ENCODE measurements at regions of chr18 and their contacts with region 1.

Region 1: GRCh38 chr18:3454365-3455089 is 4.6 kb downstream of the TGIF1 start:
- DNase-seq: no peak
- ATAC-seq: no peak
- H3K4me3 ChIP-seq: peak overlapping the region; percentile 97
- H3K27ac ChIP-seq: peak overlapping the region; percentile 100
- H3K4me1 ChIP-seq: peaks cover 32% of the 10 kb centered on the region
- H3K27me3 ChIP-seq: no peaks in the 10 kb centered on the region
- CTCF ChIP-seq: peak; percentile 68

Region 2: GRCh38 chr18:3525870-3526420 is 71.4 kb after region 1 on chr18:
- intact Hi-C with region 1: loop called in 1 of 2 experiments (anchors 5 kb)
- DNase-seq: no peak
- ATAC-seq: peak; percentile 62 to 78 (median 75)
- H3K4me3 ChIP-seq: peak overlapping the region; percentile 17
- H3K27ac ChIP-seq: peak overlapping the region; percentile 74
- H3K4me1 ChIP-seq: peaks cover 11% of the 10 kb centered on the region
- H3K27me3 ChIP-seq: peaks cover 0 to 2% (median 0%) of the 10 kb centered on the region in 3 donors
- CTCF ChIP-seq: no peak

Region 3: GRCh38 chr18:3566851-3567250 is 112.3 kb after region 1 on chr18:
- intact Hi-C with region 1: no loop called
- DNase-seq: no peak
- ATAC-seq: no peak
- H3K4me3 ChIP-seq: no peak overlapping the region
- H3K27ac ChIP-seq: no peak overlapping the region
- H3K4me1 ChIP-seq: no peaks in the 10 kb centered on the region
- H3K27me3 ChIP-seq: no peaks in the 10 kb centered on the region
- CTCF ChIP-seq: no peak

Measured in psoas muscle (tissue), 8 donors.